Caco-2 (cell line): ENCODE measurements at regions of chr3 and their contacts with region 1.

Region 1: GRCh38 chr3:31448035-31448881 is 84.5 kb upstream of the STT3B start:
- DNase-seq: peak; percentile 37 to 52
- H3K4me3 ChIP-seq: no peak overlapping the region
- H3K4me3 Mint-ChIP-seq: no peak overlapping the region
- H3K27ac Mint-ChIP-seq: no peak overlapping the region
- H3K4me1 ChIP-seq: peaks cover 12% of the 10 kb centered on the region; the same call in 1 of the 2 replicates
- H3K4me1 Mint-ChIP-seq: no peaks in the 10 kb centered on the region
- H3K27me3 ChIP-seq: no peaks in the 10 kb centered on the region
- H3K27me3 Mint-ChIP-seq: no peaks in the 10 kb centered on the region
- CTCF ChIP-seq: peak; percentile 56 to 71

Region 2: DNA sequence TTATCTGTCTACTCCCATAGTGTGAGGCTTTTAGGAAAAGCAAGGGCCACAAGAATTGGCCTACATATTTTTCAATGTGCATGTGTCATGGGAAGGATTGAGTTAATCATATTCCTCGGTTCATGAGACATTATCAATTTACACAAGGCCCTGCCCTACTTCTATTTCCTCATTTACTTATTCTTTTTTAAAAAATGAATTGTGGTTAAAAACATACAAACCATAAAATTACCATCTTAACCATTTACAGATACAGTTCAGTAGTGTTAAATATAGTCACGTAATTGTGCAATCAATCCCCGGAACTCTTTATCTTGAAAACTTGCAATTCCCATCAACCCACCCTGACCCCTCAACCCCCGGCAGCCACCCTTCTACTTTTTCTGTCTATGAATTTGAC is 269.8 kb before region 1 on chr3:
- CTCF ChIA-PET with region 1: no interaction called
- POLR2A ChIA-PET with region 1: no interaction called
- intact Hi-C with region 1: no loop called
- DNase-seq: no peak
- H3K4me3 ChIP-seq: no peak overlapping the region
- H3K4me3 Mint-ChIP-seq: no peak overlapping the region
- H3K27ac Mint-ChIP-seq: no peak overlapping the region
- H3K4me1 ChIP-seq: peaks cover 6% of the 10 kb centered on the region; the same call in 1 of the 2 replicates
- H3K4me1 Mint-ChIP-seq: peaks cover 5% of the 10 kb centered on the region
- H3K27me3 ChIP-seq: no peaks in the 10 kb centered on the region
- H3K27me3 Mint-ChIP-seq: no peaks in the 10 kb centered on the region
- CTCF ChIP-seq: no peak

Region 3: GRCh38 chr3:31244929-31245817 is 203.1 kb before region 1 on chr3:
- CTCF ChIA-PET with region 1: no interaction called
- POLR2A ChIA-PET with region 1: no interaction called
- intact Hi-C with region 1: loop called (anchors 2 kb)
- DNase-seq: peak in 1 of 2 experiments; percentile 11
- H3K4me3 ChIP-seq: no peak overlapping the region
- H3K4me3 Mint-ChIP-seq: no peak overlapping the region
- H3K27ac Mint-ChIP-seq: no peak overlapping the region
- H3K4me1 ChIP-seq: peaks cover 16% of the 10 kb centered on the region
- H3K4me1 Mint-ChIP-seq: peaks cover 13% of the 10 kb centered on the region
- H3K27me3 ChIP-seq: no peaks in the 10 kb centered on the region
- H3K27me3 Mint-ChIP-seq: no peaks in the 10 kb centered on the region
- CTCF ChIP-seq: no peak

Region 4: DNA sequence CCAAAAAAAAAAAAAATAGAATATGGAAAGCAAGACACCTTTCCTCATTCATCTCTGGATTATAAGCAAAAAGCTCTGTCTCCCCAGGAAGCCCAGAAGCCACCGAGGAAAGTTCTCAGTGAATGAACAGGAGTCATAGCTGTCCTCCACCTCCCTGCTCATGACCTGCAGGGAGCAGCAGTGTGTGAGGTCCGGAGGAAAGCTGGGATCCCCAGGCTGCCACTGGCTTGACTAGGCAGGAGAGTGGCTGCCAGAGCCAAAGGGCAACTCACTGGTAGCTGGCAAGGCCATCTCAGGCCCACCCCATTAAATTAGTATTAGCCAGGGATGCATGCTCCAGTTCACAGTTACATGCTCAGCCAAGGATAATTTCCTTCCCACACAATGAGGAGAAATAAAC is 107.1 kb before region 1 on chr3:
- CTCF ChIA-PET with region 1: interaction called, 3 read pairs
- POLR2A ChIA-PET with region 1: no interaction called
- intact Hi-C with region 1: loop called (anchors 1 kb)
- DNase-seq: peak; percentile 13 to 39
- H3K4me3 ChIP-seq: no peak overlapping the region
- H3K4me3 Mint-ChIP-seq: no peak overlapping the region
- H3K27ac Mint-ChIP-seq: no peak overlapping the region
- H3K4me1 ChIP-seq: no peaks in the 10 kb centered on the region
- H3K4me1 Mint-ChIP-seq: peaks cover 8% of the 10 kb centered on the region
- H3K27me3 ChIP-seq: no peaks in the 10 kb centered on the region
- H3K27me3 Mint-ChIP-seq: no peaks in the 10 kb centered on the region
- CTCF ChIP-seq: peak in 1 of 2 experiments; percentile 24

Region 5: DNA sequence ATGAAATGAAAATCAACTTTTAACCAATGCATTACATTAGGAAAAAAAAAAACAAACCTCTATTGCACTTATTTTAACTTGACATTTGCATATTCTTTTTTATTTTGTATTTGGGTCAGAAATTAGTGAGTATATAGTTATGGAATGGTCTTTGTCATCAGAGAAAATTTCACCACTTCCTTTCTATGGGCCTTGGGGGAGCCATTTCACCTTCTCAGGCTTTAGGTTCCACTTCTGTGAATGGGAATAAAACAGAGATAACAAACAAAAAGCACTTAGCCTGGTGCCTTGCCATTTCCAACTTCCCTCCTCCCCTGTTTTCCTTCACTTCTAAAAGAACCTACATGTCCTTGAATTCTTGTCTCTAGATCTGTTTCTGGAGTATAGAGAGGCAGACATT is 83.5 kb before region 1 on chr3:
- CTCF ChIA-PET with region 1: no interaction called
- POLR2A ChIA-PET with region 1: no interaction called
- intact Hi-C with region 1: loop called (anchors 5 kb)
- DNase-seq: no peak
- H3K4me3 ChIP-seq: no peak overlapping the region
- H3K4me3 Mint-ChIP-seq: no peak overlapping the region
- H3K27ac Mint-ChIP-seq: no peak overlapping the region
- H3K4me1 ChIP-seq: peaks cover 25% of the 10 kb centered on the region
- H3K4me1 Mint-ChIP-seq: peaks cover 19% of the 10 kb centered on the region
- H3K27me3 ChIP-seq: no peaks in the 10 kb centered on the region
- H3K27me3 Mint-ChIP-seq: no peaks in the 10 kb centered on the region
- CTCF ChIP-seq: no peak

Region 6: GRCh38 chr3:31908391-31909097 is 460.3 kb after region 1 on chr3:
- CTCF ChIA-PET with region 1: no interaction called
- POLR2A ChIA-PET with region 1: no interaction called
- intact Hi-C with region 1: no loop called
- DNase-seq: peak in 1 of 2 experiments; percentile 27
- H3K4me3 ChIP-seq: no peak overlapping the region
- H3K4me3 Mint-ChIP-seq: no peak overlapping the region
- H3K27ac Mint-ChIP-seq: peak overlapping the region; percentile 2
- H3K4me1 ChIP-seq: no peaks in the 10 kb centered on the region; the same call in 1 of the 2 replicates
- H3K4me1 Mint-ChIP-seq: peaks cover 6% of the 10 kb centered on the region
- H3K27me3 ChIP-seq: no peaks in the 10 kb centered on the region
- H3K27me3 Mint-ChIP-seq: no peaks in the 10 kb centered on the region
- CTCF ChIP-seq: peak in 1 of 2 experiments; percentile 37